ENCODE measurements at regions of chr10 and their contacts with region 1.

Region 1: GRCh38 chr10:21516242-21517131 is 9.0 kb downstream of the SKIDA1 start:
- DNase-seq: no peak
- H3K4me3 ChIP-seq: peak overlapping the region; percentile 53 to 70 (median 65)
- H3K27ac ChIP-seq: peak overlapping the region; percentile 76 to 100 (median 92)
- H3K4me1 ChIP-seq: peaks cover 15 to 80% (median 19%) of the 10 kb centered on the region in 3 donors
- H3K27me3 ChIP-seq: peaks cover 0 to 32% (median 0%) of the 10 kb centered on the region in 4 donors
- CTCF ChIP-seq: no peak
- POLR2A ChIP-seq: no peak

Region 2: DNA sequence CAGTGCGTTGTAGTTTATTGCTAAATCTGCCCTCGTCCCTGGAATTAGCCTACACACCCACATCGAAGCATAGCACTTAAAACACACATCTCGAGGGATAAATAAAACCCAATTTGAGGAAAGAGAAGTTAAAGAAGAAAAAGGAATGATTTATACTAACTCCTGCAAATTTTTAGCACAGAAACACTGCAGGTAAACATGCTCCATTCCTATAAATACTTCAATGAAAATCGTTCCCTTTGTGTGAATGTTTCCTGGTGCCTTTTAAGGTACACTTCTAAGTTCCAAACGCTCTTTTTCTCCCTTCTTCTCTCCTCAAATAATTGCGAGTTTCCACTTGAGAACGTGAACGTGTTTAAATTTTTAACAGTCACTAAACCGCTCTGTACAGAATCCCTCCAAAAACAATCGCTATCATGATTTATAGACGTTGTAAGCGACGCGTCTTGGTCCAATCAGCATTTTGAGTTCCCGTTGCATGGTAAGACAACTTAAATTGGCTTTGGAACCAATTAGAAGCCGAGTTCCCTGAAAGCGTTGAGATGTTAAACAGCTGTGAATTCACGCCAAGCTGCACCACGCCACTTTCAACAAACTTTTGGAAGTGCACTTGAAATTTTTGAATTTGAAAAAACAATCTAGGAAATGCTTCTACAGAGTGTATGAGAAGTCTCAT is 713.8 kb after region 1 on chr10:
- intact Hi-C with region 1: loop called (anchors 10 kb)
- DNase-seq: no peak
- H3K4me3 ChIP-seq: peak overlapping the region; percentile 63 to 86 (median 68)
- H3K27ac ChIP-seq: peak overlapping the region; percentile 87 to 95 (median 90)
- H3K4me1 ChIP-seq: peaks cover 0 to 16% (median 0%) of the 10 kb centered on the region in 3 donors
- H3K27me3 ChIP-seq: peaks cover 0 to under 1% (median 0%) of the 10 kb centered on the region in 4 donors
- CTCF ChIP-seq: no peak
- POLR2A ChIP-seq: peak in 1 of 4 donors; percentile 17